Activated CD4-positive, alpha-beta T cell treated with anti-CD3 and anti-CD28 coated beads, Interleukin-2, amount 10 ng/mL, durations not matched to agents 24 days and 14 days (primary cell): ENCODE measurements at regions of chr9 and their contacts with region 1.

Region 1: GRCh38 chr9:4984621-4985385 is at the start of gene JAK2:
- DNase-seq: peak; percentile 96
- H3K4me3 Mint-ChIP-seq: no peak within 1 kb of the TSS
- H3K27ac Mint-ChIP-seq: peak within 1 kb of the TSS; percentile 97
- H3K4me1 Mint-ChIP-seq: peaks cover 46% of the 10 kb centered on the region
- H3K27me3 Mint-ChIP-seq: no peaks in the 10 kb centered on the region
- total RNA-seq, gene JAK2: 29.3 and 29.9 TPM in 2 replicates

Region 2: GRCh38 chr9:4297151-4297785 is 687.5 kb before region 1 on chr9:
- intact Hi-C with region 1: loop called (anchors 10 kb)
- DNase-seq: peak; percentile 78
- H3K4me3 Mint-ChIP-seq: peak overlapping the region; percentile 99
- H3K27ac Mint-ChIP-seq: peak overlapping the region; percentile 91
- H3K4me1 Mint-ChIP-seq: peaks cover 29% of the 10 kb centered on the region
- H3K27me3 Mint-ChIP-seq: peaks cover 69% of the 10 kb centered on the region

Region 3: DNA sequence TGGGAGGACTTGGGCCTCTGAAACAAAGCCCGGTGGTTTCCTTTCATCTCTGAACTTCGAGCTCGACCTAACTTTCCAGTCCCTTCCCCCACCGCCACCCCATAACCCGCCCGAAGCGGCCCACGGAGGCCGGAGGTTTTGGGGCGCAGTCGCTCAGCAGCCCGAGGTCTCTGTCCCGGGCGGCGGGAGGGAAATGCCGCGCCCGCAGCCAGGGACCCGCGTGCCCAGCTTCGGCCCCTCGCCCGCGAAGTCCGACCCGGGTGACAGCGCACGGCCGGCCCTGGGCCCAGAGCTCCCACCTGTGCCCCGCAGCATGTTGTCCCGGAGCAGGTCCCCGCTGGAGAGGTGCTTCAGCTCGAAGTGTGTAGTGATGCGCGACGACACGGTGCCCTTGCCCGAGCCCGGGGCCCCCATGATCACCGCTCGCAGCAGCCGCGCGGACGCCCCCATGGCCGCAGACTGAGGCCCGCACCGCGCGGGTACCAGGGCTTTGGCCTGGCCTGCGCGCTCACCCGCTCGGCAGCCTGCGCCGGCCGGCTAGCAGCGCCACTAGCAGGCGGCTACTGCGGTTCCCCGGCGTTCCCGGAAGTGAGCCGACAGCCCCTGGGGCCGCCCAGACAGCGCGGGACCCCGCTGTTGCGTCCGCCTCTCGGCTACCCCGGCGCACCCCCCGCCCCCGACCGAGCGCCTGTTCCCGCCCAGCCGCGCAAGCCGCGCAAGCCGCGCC is 244.0 kb before region 1 on chr9 and contains the start of gene AK3:
- intact Hi-C with region 1: loop called (anchors 1 kb)
- DNase-seq: peak; percentile 96
- H3K4me3 Mint-ChIP-seq: peak within 1 kb of the TSS; percentile 87
- H3K27ac Mint-ChIP-seq: peak within 1 kb of the TSS; percentile 90
- H3K4me1 Mint-ChIP-seq: peaks cover 31% of the 10 kb centered on the region
- H3K27me3 Mint-ChIP-seq: no peaks in the 10 kb centered on the region
- total RNA-seq, gene AK3: 22.9 and 27.3 TPM in 2 replicates

Region 4: GRCh38 chr9:4832786-4833579 is 151.8 kb before region 1 on chr9:
- intact Hi-C with region 1: loop called (anchors 1 kb)
- DNase-seq: peak; percentile 78
- H3K4me3 Mint-ChIP-seq: peak overlapping the region; percentile 55
- H3K27ac Mint-ChIP-seq: peak overlapping the region; percentile 94
- H3K4me1 Mint-ChIP-seq: peaks cover 52% of the 10 kb centered on the region
- H3K27me3 Mint-ChIP-seq: no peaks in the 10 kb centered on the region

Region 5: DNA sequence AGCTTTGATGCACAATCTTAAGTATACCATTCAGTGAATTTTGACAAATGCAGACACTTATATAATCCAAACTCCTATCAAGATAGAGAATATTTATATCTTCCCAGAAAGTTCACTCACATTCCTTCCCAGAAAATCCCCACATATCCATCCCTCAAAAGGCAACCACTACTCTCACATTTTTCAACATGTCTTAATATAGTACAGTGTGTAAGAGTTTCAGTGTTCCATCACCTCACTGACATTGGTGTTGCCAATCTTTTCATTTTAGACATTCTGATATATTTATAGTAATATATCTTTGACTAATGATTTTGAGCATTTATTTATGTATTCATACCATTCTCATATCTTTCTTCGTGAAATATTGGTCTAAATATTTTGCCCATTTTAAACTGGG is 37.9 kb before region 1 on chr9:
- intact Hi-C with region 1: no loop called
- DNase-seq: no peak
- H3K4me3 Mint-ChIP-seq: no peak overlapping the region
- H3K27ac Mint-ChIP-seq: no peak overlapping the region
- H3K4me1 Mint-ChIP-seq: peaks cover 29% of the 10 kb centered on the region
- H3K27me3 Mint-ChIP-seq: no peaks in the 10 kb centered on the region

Region 6: GRCh38 chr9:4970970-4971641 is 13.7 kb before region 1 on chr9:
- intact Hi-C with region 1: loop called (anchors 1 kb)
- DNase-seq: peak; percentile 88
- H3K4me3 Mint-ChIP-seq: no peak overlapping the region
- H3K27ac Mint-ChIP-seq: no peak overlapping the region
- H3K4me1 Mint-ChIP-seq: peaks cover 20% of the 10 kb centered on the region
- H3K27me3 Mint-ChIP-seq: no peaks in the 10 kb centered on the region

Region 7: DNA sequence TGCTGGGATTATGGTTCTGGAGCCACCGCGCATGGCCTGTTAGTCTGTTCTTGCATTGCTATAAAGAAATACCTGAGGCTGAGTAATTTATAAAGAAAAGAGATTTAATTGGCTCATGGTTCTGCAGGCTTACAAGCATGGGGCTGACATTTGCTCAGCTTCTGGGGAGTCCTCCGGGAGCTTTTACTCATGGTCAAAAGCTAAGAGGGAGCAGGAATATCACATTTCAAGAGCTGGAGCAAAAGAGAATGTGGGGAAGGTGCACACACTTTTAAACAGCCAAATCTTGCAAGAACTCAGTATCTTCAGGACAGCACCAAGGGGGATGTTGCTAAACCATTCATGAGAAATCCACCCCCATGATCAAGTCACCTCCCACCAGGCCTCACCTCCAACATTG is 12.4 kb after region 1 on chr9:
- intact Hi-C with region 1: no loop called
- DNase-seq: no peak
- H3K4me3 Mint-ChIP-seq: no peak overlapping the region
- H3K27ac Mint-ChIP-seq: no peak overlapping the region
- H3K4me1 Mint-ChIP-seq: peaks cover 58% of the 10 kb centered on the region
- H3K27me3 Mint-ChIP-seq: no peaks in the 10 kb centered on the region

Region 8: DNA sequence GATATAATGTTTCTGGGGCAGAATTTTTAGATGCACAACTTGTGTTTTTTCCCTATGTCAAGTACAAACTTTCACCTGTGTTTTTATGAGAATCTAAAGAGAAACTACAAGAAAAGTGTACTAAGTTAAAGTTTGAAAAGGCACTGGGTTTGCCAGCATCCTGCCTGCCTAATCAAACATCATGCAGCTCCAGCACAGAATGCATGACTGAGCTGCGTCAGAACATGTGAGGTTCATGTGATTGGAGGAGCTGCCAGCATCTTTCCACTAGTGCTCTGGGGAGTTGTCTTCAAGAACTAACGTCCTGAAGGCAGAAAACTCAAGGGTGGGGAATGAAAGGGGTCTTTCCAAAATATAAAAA is 598.0 kb after region 1 on chr9:
- intact Hi-C with region 1: loop called (anchors 5 kb)
- DNase-seq: peak; percentile 88
- H3K4me3 Mint-ChIP-seq: peak overlapping the region; percentile 40
- H3K27ac Mint-ChIP-seq: peak overlapping the region; percentile 92
- H3K4me1 Mint-ChIP-seq: peaks cover 69% of the 10 kb centered on the region
- H3K27me3 Mint-ChIP-seq: no peaks in the 10 kb centered on the region